ENCODE measurements at regions of chr11 and their contacts with region 1.

Region 1: DNA sequence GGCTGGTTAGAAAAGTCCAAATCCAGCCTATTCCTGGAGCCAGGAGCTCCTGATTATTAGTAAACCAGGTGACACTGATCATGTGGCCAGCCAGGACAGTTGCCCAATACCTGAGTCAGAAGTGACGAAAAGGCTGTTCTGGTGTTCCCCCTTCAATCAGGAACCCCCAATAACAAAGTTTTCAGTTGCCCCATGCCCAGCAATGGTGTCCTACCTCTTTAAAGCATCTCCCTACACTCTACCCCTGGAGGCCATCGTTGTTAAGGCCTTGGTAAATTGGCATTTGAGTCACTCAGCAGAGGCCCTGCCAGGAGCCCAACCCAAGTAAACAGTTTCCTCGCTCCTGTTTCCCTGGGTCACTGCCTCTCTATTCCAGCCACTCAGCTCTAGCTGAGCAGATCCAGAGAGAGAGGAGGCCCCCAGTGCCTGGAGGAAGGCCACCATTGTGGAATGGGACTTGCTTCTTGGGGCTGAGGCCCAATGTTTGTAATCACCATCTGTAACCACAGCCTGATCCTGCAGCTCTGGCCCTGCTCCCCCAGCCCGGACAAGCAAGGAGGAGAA is 25.0 kb downstream of the ARHGAP1 start:
- DNase-seq: peak; percentile 74 to 84
- ATAC-seq: peak; percentile 82 to 84
- H3K4me3 ChIP-seq: no peak overlapping the region
- H3K27ac ChIP-seq: peak overlapping the region; percentile 85 to 92 (median 88)
- H3K4me1 ChIP-seq: peaks cover 22 to 34% of the 10 kb centered on the region in 2 donors
- H3K27me3 ChIP-seq: no peaks in the 10 kb centered on the region
- CTCF ChIP-seq: no peak
- POLR2A ChIP-seq: peak in 1 of 2 donors; percentile 37

Region 2: DNA sequence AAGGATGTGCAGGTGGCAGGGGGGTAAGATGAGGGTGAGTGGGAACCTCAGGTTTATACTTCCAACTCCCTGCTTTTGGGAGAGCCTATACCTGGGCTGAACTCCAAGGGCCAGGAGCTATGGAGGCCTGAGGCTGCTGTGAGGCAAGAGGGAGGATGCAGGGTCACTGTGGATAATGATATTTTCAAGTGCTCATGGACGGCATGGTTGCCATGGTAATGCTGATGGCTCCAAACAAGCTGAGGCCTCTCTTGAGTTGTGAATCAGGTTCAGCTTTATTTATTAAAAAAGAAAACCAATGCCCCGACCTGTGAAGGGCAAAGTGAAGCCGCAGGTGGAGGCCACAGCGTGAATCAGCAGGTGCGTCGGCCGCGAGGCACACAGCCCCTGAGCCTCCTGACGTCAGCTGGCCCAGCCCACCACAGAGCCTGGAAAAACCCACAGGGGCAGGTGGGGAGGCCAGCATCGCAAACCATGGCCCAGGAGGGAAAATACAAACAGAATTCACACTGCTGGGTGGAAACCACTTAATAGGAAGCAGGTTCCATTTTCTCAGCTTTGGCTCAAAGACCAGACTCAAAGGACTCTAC is 415.3 kb before region 1 on chr11:
- in situ Hi-C with region 1: no loop called
- intact Hi-C with region 1: no loop called
- DNase-seq: no peak
- ATAC-seq: no peak
- H3K4me3 ChIP-seq: no peak overlapping the region
- H3K27ac ChIP-seq: no peak overlapping the region
- H3K4me1 ChIP-seq: no peaks in the 10 kb centered on the region
- H3K27me3 ChIP-seq: no peaks in the 10 kb centered on the region
- CTCF ChIP-seq: no peak
- POLR2A ChIP-seq: no peak

Region 3: GRCh38 chr11:46710821-46711269 is 35.5 kb after region 1 on chr11:
- in situ Hi-C with region 1: no loop called
- intact Hi-C with region 1: loop called (anchors 2 kb)
- DNase-seq: peak; percentile 92 to 94
- ATAC-seq: peak; percentile 94 to 97
- H3K4me3 ChIP-seq: no peak overlapping the region
- H3K27ac ChIP-seq: peak overlapping the region; percentile 84 to 100 (median 98)
- H3K4me1 ChIP-seq: peaks cover 20 to 46% of the 10 kb centered on the region in 2 donors
- H3K27me3 ChIP-seq: no peaks in the 10 kb centered on the region
- CTCF ChIP-seq: no peak
- POLR2A ChIP-seq: peak; percentile 45 to 63

Measured in gastrocnemius medialis (tissue), 4 donors.